ENCODE measurements at regions of chr5 and their contacts with region 1.

Region 1: GRCh38 chr5:142769741-142770631 is at the start of gene ARHGAP26:
- DNase-seq: peak; percentile 93 to 96 (median 96)
- ATAC-seq: peak; percentile 100
- H3K4me3 ChIP-seq: peak within 1 kb of the TSS; percentile 70
- H3K27ac ChIP-seq: no peak within 1 kb of the TSS
- H3K4me1 ChIP-seq: peaks cover 3 to 19% of the 10 kb centered on the region in 2 experiments; a peak in 3 of 5 replicates
- H3K27me3 ChIP-seq: peaks cover 5 to 13% of the 10 kb centered on the region in 2 experiments; a peak in 4 of 5 replicates
- CTCF ChIP-seq: peak in 2 of 3 experiments; percentile 36 to 43; a peak in 3 of 6 replicates
- EP300 ChIP-seq: no peak
- POLR2A ChIP-seq: no peak
- RAD21 ChIP-seq: peak in 1 of 2 experiments; percentile 49; a peak in 3 of 4 replicates
- polyA plus RNA-seq, gene ARHGAP26: 0.23 to 0.53 TPM

Region 2: GRCh38 chr5:142726188-142726731 is 43.7 kb before region 1 on chr5:
- CTCF ChIA-PET with region 1: no interaction called
- POLR2A ChIA-PET with region 1: interaction called, 3 read pairs
- in situ Hi-C with region 1: no loop called
- intact Hi-C with region 1: loop called (anchors 1 kb)
- DNase-seq: no peak
- ATAC-seq: no peak
- H3K4me3 ChIP-seq: no peak overlapping the region
- H3K27ac ChIP-seq: no peak overlapping the region
- H3K4me1 ChIP-seq: no peaks in the 10 kb centered on the region; a peak in 1 of 5 replicates
- H3K27me3 ChIP-seq: peaks cover 0 to 22% of the 10 kb centered on the region in 2 experiments; a peak in 3 of 5 replicates
- CTCF ChIP-seq: no peak
- EP300 ChIP-seq: peak; percentile 36; the same call in 1 of the 2 replicates
- POLR2A ChIP-seq: no peak
- RAD21 ChIP-seq: no peak

Measured in K562 (cell line).